ENCODE measurements at regions of chr6 and their contacts with region 1.

Region 1: DNA sequence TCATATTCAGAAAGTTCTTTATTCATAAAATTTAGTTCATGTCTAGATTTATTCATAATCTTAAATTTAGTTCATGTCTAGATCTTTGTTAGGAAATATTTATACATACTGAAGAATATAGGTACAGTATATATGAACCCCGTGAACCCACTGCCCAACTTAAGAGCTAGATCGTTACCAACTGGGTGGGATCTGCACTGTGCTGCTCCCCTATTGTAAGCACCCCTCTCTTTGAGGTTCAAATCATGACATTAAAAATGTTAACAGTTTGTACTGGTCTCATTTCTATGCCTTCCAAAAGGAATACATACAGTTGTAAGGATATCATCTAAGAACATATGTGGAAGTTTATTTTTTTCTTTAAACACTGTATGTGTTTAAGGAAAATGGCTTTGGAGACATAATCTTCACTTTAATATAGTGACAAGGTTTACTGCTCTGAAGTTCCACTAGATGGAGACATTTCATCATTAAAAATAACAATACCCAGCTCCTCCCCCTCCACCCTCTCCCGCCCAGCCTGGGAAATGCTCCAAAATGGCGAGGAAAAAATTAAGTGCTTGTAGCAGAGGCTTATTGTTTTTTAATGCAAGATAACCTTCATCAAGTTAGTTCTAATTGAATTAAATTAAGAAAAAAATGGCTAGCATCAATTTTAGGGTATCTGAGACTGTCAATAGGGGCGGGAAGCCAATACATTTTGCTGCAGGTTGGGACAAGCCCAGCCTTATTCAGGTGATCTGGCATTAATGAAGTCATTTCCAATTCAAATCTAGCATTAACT is 104.1 kb upstream of the TRAF3IP2 start:
- DNase-seq: peak; percentile 69 to 86 (median 85)
- ATAC-seq: peak; percentile 98
- H3K4me3 ChIP-seq: no peak overlapping the region
- H3K27ac ChIP-seq: no peak overlapping the region
- H3K4me1 ChIP-seq: no peaks in the 10 kb centered on the region
- H3K27me3 ChIP-seq: peaks cover 3 to 13% of the 10 kb centered on the region in 2 experiments; a peak in 2 of 5 replicates
- CTCF ChIP-seq: peak; percentile 64 to 90 (median 72)
- EP300 ChIP-seq: no peak
- POLR2A ChIP-seq: no peak
- RAD21 ChIP-seq: peak; percentile 85 to 95

Region 2: GRCh38 chr6:111997078-111997852 is 287.5 kb after region 1 on chr6:
- CTCF ChIA-PET with region 1: interaction called, 19 read pairs
- POLR2A ChIA-PET with region 1: interaction called, 3 read pairs
- in situ Hi-C with region 1: loop called (anchors 5 kb)
- intact Hi-C with region 1: loop called (anchors 1 kb)
- DNase-seq: peak; percentile 67 to 79 (median 70)
- ATAC-seq: peak; percentile 98
- H3K4me3 ChIP-seq: no peak overlapping the region
- H3K27ac ChIP-seq: no peak overlapping the region
- H3K4me1 ChIP-seq: no peaks in the 10 kb centered on the region
- H3K27me3 ChIP-seq: peaks cover 6 to 36% of the 10 kb centered on the region in 2 experiments; a peak in 3 of 5 replicates
- CTCF ChIP-seq: peak; percentile 87 to 91 (median 87)
- EP300 ChIP-seq: no peak
- POLR2A ChIP-seq: no peak
- RAD21 ChIP-seq: peak; percentile 95 to 96

Region 3: DNA sequence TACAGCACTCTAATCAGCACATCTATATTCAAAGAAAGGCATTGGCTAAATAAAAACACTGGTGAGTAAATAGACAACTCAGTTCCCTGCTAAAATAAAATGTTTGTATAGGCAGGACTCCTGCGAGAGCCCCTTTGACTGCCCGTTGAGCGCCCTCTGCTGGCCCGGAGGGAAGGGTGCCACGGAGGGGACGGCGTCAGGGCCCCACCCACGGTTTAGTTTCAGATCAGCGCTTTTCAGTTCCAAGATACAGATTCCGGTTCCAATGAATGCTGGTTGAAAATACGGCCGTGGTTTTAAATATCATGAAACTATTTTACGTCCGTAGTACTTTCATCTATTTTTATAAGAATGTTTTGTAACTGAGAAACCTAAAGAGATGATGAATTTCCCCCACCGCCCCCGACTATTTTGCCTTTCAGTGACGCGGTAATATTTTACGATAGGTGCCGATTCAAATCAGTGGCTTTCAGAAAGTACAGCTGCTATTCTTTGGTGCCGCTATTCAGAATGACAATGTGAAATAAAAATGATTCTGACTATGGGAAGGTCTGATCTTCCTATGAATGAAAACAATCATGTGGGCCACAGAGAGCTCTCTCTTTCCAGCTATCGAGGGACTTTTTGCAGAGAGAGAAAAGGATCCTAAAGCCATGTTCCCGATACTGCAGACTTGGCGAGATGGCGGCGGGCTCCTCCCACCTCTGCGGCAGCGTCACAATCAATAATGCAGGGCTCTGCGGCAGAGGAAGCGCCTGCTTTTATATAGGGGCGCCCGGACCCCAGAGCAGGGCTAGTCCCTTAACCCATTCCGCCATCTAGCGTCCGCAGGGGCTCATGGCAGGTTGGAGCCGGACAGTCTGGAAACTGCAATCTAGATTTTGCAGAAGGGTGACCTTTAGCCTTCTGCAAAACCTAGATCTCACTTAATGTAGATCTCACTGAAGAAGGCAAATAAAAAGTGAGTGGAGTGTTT is 333.5 kb after region 1 on chr6:
- CTCF ChIA-PET with region 1: interaction called, 24 read pairs
- POLR2A ChIA-PET with region 1: no interaction called
- in situ Hi-C with region 1: no loop called
- intact Hi-C with region 1: loop called (anchors 1 kb)
- DNase-seq: peak; percentile 87 to 93 (median 92)
- ATAC-seq: peak; percentile 97
- H3K4me3 ChIP-seq: peak overlapping the region; percentile 49
- H3K27ac ChIP-seq: peak overlapping the region; percentile 26
- H3K4me1 ChIP-seq: peaks cover 0 to 5% of the 10 kb centered on the region in 2 experiments; a peak in 1 of 5 replicates
- H3K27me3 ChIP-seq: peaks cover 5 to 15% of the 10 kb centered on the region in 2 experiments; a peak in 4 of 5 replicates
- CTCF ChIP-seq: peak; percentile 92 to 96 (median 95)
- EP300 ChIP-seq: peak; percentile 56
- POLR2A ChIP-seq: no peak; the same call in 1 of the 2 replicates
- RAD21 ChIP-seq: peak; percentile 86 to 89

Region 4: DNA sequence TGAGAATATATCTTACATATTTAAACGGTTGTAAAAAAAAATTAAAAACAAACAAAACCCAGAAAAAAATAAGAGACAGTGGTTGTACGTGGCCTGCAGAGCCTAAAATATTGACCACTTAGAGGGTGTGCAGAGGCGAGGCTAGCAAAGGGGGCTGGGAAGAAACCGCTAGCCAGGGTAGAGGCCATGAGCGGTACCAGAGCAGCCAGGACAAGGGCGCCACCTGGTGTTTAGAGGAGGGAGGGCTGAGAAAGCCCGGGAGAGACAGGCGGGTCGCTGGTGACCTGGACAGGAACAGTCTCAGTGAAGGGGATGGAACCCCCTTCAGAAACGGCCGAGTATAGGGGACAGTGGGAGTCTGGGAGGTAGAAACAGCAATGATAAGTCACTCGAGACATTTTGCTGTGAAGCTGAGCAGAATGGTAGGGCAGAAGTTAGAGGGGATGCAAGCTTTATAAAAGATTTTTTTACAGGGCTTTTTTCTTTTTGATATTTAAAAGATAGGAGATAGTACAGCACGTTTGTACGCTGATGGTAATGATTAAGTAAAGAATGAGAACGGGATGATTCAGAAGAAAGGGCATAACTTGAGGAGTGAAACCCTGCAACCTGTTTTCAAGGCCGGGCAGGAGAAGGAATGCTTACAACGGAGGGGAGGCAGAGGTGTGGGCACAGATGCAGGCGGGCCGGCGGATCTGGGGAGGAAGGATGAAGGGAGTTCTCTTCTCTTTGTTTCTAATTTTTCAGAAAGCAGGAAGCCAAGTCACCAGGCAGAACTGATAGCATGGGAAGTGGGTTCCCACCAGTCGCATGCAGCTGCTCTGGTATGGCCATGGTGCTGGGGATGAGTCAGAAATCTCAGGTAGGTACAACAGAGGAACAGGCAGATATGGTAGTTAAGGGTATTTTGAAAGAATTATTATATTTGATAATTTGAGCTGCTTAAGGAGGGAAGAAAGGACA is 453.8 kb after region 1 on chr6:
- CTCF ChIA-PET with region 1: interaction called, 21 read pairs
- POLR2A ChIA-PET with region 1: no interaction called
- in situ Hi-C with region 1: no loop called
- intact Hi-C with region 1: loop called (anchors 1 kb)
- DNase-seq: peak; percentile 72 to 80 (median 79)
- ATAC-seq: peak; percentile 100
- H3K4me3 ChIP-seq: no peak overlapping the region
- H3K27ac ChIP-seq: no peak overlapping the region
- H3K4me1 ChIP-seq: no peaks in the 10 kb centered on the region
- H3K27me3 ChIP-seq: peaks cover 8% of the 10 kb centered on the region in 2 experiments
- CTCF ChIP-seq: peak; percentile 84 to 89 (median 88)
- EP300 ChIP-seq: no peak
- POLR2A ChIP-seq: no peak
- RAD21 ChIP-seq: peak; percentile 83 to 93

Measured in K562 (cell line).